ENCODE measurements at regions of chr10 and their contacts with region 1.

Region 1: GRCh38 chr10:118106426-118106825 is 59.7 kb upstream of the RAB11FIP2 start:
- DNase-seq: peak; percentile 31
- H3K4me3 ChIP-seq: no peak overlapping the region
- H3K27ac ChIP-seq: no peak overlapping the region
- H3K4me1 ChIP-seq: no peaks in the 10 kb centered on the region
- H3K27me3 ChIP-seq: peaks cover 58% of the 10 kb centered on the region
- CTCF ChIP-seq: peak; percentile 63

Region 2: GRCh38 chr10:117710181-117710798 is 396.1 kb before region 1 on chr10:
- CTCF ChIA-PET with region 1: no interaction called
- POLR2A ChIA-PET with region 1: no interaction called
- intact Hi-C with region 1: loop called (anchors 10 kb)
- DNase-seq: no peak
- H3K4me3 ChIP-seq: no peak overlapping the region
- H3K27ac ChIP-seq: no peak overlapping the region
- H3K4me1 ChIP-seq: no peaks in the 10 kb centered on the region
- H3K27me3 ChIP-seq: peaks cover 14% of the 10 kb centered on the region
- CTCF ChIP-seq: peak; percentile 49

Region 3: DNA sequence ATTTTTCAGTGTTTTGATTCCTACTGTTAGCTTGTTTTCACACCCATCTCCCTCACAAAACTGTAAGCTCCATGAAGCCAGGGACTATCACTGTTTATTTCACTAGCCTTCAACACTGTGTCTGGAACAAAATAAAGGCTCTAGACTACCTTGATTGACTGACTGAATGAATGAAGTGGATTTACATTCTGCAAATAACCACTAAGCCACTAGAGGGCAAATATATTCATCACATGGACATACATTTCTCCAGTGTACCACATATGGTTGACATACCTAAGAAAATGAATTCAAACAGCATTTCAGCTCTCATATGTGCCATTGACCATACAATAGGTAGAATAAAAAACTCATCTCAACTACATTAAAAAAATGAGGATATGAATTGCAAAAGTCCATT is 245.6 kb before region 1 on chr10:
- CTCF ChIA-PET with region 1: no interaction called
- POLR2A ChIA-PET with region 1: no interaction called
- intact Hi-C with region 1: loop called (anchors 2 kb)
- DNase-seq: peak; percentile 27
- H3K4me3 ChIP-seq: no peak overlapping the region
- H3K27ac ChIP-seq: no peak overlapping the region
- H3K4me1 ChIP-seq: no peaks in the 10 kb centered on the region
- H3K27me3 ChIP-seq: peaks cover 43% of the 10 kb centered on the region
- CTCF ChIP-seq: peak; percentile 61

Region 4: GRCh38 chr10:117905404-117905803 is 201.0 kb before region 1 on chr10:
- CTCF ChIA-PET with region 1: no interaction called
- POLR2A ChIA-PET with region 1: no interaction called
- intact Hi-C with region 1: no loop called
- DNase-seq: no peak
- H3K4me3 ChIP-seq: no peak overlapping the region
- H3K27ac ChIP-seq: no peak overlapping the region
- H3K4me1 ChIP-seq: no peaks in the 10 kb centered on the region
- H3K27me3 ChIP-seq: peaks cover 41% of the 10 kb centered on the region
- CTCF ChIP-seq: no peak

Measured in A673 (cell line).